ENCODE measurements at regions of chr11 and their contacts with region 1.

Region 1: DNA sequence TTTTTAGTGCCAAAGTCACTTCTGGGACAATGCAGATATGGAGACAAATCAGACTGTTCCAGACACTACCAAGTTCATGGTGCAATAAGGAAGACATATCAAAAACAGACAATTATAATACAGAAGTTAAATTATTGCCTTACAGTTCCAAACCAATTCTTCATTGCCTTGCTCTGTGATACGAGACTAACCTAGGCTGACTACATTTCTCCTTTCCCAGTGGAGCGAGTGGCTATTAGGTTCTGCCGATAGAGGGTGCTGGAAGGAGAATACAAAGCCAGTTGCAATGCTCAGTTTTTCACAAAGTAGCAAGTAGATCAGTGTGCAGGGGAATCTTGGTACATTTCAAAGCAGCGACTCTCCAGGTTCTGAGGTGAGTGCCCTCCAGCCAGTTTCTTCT is 67.8 kb downstream of the FAM168A start:
- DNase-seq: peak in 1 of 2 experiments; percentile 10
- H3K4me3 ChIP-seq: no peak overlapping the region
- H3K27ac ChIP-seq: no peak overlapping the region
- H3K4me1 ChIP-seq: peaks cover 0 to 21% (median 12%) of the 10 kb centered on the region in 4 experiments; a peak in 6 of 7 replicates
- H3K27me3 ChIP-seq: no peaks in the 10 kb centered on the region
- CTCF ChIP-seq: peak in 2 of 3 experiments; percentile 62 to 75; a peak in 3 of 4 replicates
- EP300 ChIP-seq: no peak
- POLR2A ChIP-seq: no peak
- RAD21 ChIP-seq: peak; percentile 45 to 65

Region 2: DNA sequence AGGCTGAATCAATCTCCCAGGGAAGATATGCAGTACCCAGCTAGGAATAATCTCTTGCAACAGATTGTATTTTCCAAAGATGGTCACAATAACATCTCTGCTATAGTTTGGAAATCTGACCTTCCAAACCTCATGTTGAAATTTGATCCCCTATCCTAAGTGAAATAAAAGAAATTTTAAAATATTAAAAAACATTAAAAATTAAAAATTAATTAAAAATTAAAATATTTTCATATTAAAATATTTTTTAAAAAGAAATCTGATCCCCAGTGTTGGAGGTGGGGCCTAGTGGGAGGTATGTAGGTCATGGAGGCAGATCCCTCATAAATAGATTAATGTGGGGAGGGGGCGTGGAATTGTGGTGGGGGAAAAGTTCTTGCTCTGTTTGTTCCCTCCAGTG is 11.9 kb before region 1 on chr11:
- CTCF ChIA-PET with region 1: interaction called, 11 read pairs
- POLR2A ChIA-PET with region 1: interaction called, 4 read pairs
- DNase-seq: no peak
- H3K4me3 ChIP-seq: no peak overlapping the region
- H3K27ac ChIP-seq: no peak overlapping the region
- H3K4me1 ChIP-seq: no peaks in the 10 kb centered on the region
- H3K27me3 ChIP-seq: no peaks in the 10 kb centered on the region
- CTCF ChIP-seq: no peak
- EP300 ChIP-seq: no peak
- POLR2A ChIP-seq: no peak
- RAD21 ChIP-seq: no peak

Region 3: DNA sequence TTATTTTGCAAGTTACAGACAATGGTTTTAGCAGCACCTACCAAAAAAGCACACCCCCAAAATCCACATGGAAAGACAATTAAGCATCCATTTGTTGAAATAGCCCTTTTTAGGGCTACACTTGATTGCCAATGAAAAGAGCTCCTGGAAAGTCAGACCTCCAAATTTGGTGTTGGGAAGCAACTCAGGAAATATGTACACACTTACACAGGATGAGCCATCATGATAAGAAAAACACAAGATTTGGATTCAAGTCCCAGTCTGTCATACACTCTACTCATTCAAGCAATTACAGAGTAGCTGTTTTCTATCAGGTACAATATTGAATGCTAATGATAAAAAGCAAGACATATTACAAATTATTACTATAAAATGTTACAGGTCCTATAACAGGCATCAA is 36.3 kb after region 1 on chr11:
- CTCF ChIA-PET with region 1: interaction called, 10 read pairs
- POLR2A ChIA-PET with region 1: interaction called, 3 read pairs
- DNase-seq: no peak
- H3K4me3 ChIP-seq: no peak overlapping the region
- H3K27ac ChIP-seq: no peak overlapping the region
- H3K4me1 ChIP-seq: no peaks in the 10 kb centered on the region; a peak in 1 of 7 replicates
- H3K27me3 ChIP-seq: no peaks in the 10 kb centered on the region
- CTCF ChIP-seq: no peak
- EP300 ChIP-seq: no peak
- POLR2A ChIP-seq: no peak
- RAD21 ChIP-seq: no peak